ENCODE measurements at regions of chrX and their contacts with region 1.

Region 1: GRCh38 chrX:132292793-132293192 is 73.5 kb upstream of the RAP2C start:
- DNase-seq: peak; percentile 19
- ATAC-seq: peak; percentile 90
- H3K4me3 ChIP-seq: no peak overlapping the region
- H3K27ac ChIP-seq: no peak overlapping the region
- H3K4me1 ChIP-seq: no peaks in the 10 kb centered on the region
- H3K27me3 ChIP-seq: no peaks in the 10 kb centered on the region
- CTCF ChIP-seq: peak; percentile 51 to 71 (median 57)
- EP300 ChIP-seq: no peak
- POLR2A ChIP-seq: no peak
- RAD21 ChIP-seq: peak; percentile 77

Region 2: DNA sequence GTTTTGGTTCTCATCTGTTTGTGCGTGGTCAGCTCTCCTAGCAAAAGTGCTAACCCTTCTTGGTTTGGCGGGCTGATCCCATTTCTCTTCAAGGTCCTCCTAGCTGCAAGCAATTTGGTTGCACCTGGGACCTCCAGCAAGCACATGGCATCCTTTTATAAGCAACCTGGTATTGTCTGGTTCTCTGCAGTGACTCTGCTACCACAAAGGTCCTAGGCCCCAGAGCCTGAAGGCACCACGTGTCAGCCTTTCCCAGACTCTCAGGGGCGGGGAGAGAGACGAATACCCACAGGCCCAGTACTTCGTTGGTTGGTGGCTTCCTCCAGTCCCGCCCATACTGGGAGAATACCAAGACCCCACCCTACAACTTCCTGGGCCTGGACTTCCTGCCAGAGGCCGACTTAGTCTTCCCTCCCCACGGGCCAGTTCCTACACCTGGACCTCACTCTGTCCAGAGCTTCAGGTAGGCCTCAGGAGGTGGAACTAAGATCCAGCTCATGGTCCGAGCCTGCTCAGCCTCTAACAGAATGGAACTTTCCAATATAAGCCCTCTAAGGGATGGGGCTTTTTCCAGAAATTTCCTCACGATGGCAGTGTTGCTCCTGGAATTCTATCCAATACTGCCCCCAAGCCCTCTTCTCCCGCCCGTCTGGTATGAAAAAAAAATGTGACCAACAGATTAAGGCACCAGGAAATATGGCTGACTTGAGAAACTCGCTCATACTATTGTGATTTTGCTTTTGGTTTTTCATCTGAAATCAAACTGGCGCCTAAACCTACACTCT is 462.2 kb before region 1 on chrX:
- CTCF ChIA-PET with region 1: interaction called, 10 read pairs
- POLR2A ChIA-PET with region 1: no interaction called
- RAD21 ChIA-PET with region 1: interaction called, 4 read pairs
- SMC1A ChIA-PET with region 1: no interaction called
- in situ Hi-C with region 1: no loop called
- intact Hi-C with region 1: no loop called
- DNase-seq: peak; percentile 69
- ATAC-seq: peak; percentile 88
- H3K4me3 ChIP-seq: peak overlapping the region; percentile 62
- H3K27ac ChIP-seq: peak overlapping the region; percentile 48
- H3K4me1 ChIP-seq: peaks cover 4% of the 10 kb centered on the region; the same call in 1 of the 2 replicates
- H3K27me3 ChIP-seq: no peaks in the 10 kb centered on the region
- CTCF ChIP-seq: peak; percentile 28 to 57 (median 42); a peak in 4 of 6 replicates
- EP300 ChIP-seq: no peak
- POLR2A ChIP-seq: peak; percentile 67
- RAD21 ChIP-seq: peak; percentile 70

Region 3: GRCh38 chrX:132092439-132093065 is 200.2 kb before region 1 on chrX:
- CTCF ChIA-PET with region 1: interaction called, 18 read pairs
- POLR2A ChIA-PET with region 1: interaction called, 3 read pairs
- RAD21 ChIA-PET with region 1: interaction called, 8 read pairs
- SMC1A ChIA-PET with region 1: interaction called, 6 read pairs
- in situ Hi-C with region 1: no loop called
- intact Hi-C with region 1: no loop called
- DNase-seq: peak; percentile 25
- ATAC-seq: peak; percentile 93
- H3K4me3 ChIP-seq: no peak overlapping the region
- H3K27ac ChIP-seq: no peak overlapping the region
- H3K4me1 ChIP-seq: no peaks in the 10 kb centered on the region
- H3K27me3 ChIP-seq: no peaks in the 10 kb centered on the region
- CTCF ChIP-seq: peak; percentile 76 to 81 (median 81)
- EP300 ChIP-seq: no peak
- POLR2A ChIP-seq: no peak
- RAD21 ChIP-seq: peak; percentile 71

Region 4: DNA sequence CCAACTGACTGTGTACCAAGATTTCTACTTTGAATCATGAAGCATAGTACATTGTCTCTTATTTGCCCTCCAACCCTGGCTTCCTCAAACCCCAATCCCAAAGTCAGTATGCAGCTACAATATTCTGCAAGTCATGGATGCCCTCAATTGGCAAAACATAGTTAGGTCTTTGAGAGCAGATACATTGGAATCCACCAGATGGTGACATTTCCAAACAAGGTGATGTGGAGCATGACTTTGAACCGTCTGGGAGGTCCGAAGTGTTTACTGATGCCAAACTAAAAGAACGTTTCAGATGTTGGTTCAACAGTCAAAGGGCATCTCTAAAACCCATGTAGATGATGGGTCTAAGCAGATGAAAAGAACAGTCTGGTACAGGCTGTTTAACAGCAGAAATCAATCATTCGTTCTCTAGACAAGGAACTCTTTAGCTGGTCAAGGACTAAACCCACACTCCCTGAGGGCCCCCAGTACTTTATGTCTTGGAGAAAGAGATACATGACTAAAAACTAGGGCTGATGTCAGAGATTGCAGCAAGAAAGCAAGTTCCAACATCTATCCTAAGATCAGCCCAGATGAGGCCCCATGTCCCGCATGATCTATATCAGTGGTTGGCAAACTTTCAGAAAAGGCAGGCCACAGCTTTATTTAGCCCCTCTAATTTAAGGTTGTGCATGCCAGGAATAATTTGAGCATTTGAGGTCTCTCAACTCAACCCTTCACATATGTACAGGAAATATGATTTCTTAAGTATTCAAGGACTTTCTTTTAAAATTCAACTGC is 121.1 kb before region 1 on chrX:
- CTCF ChIA-PET with region 1: no interaction called
- POLR2A ChIA-PET with region 1: no interaction called
- RAD21 ChIA-PET with region 1: no interaction called
- SMC1A ChIA-PET with region 1: no interaction called
- in situ Hi-C with region 1: no loop called
- intact Hi-C with region 1: no loop called
- DNase-seq: no peak
- ATAC-seq: no peak; the same call in 2 of the 3 replicates
- H3K4me3 ChIP-seq: no peak overlapping the region
- H3K27ac ChIP-seq: no peak overlapping the region
- H3K4me1 ChIP-seq: no peaks in the 10 kb centered on the region
- H3K27me3 ChIP-seq: peaks cover 0 to 3% of the 10 kb centered on the region in 2 experiments; a peak in 1 of 4 replicates
- CTCF ChIP-seq: peak in 2 of 3 experiments; percentile 5 to 12; a peak in 2 of 6 replicates
- EP300 ChIP-seq: no peak
- POLR2A ChIP-seq: no peak
- RAD21 ChIP-seq: peak; percentile 37; the same call in 1 of the 2 replicates

Region 5: DNA sequence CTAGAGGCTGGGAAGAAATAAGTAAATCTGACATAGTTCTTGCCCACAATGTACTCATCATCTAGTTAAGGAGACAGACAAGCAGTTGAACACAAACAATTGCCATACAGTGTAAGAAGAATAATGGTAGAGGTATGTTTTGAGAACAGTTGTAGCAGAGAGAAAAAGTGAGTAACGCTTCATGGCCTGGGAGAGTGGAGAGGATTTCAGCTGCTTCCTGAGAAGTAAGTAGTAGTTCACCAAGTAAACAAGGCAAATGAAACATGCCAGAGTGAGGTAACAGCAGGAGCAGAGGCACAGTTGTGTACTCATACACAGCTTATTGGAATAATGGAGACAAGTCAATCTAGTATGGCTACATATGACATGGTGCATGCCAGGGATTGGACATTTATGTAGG is 20.0 kb before region 1 on chrX:
- CTCF ChIA-PET with region 1: interaction called, 14 read pairs
- POLR2A ChIA-PET with region 1: no interaction called
- RAD21 ChIA-PET with region 1: interaction called, 3 read pairs
- SMC1A ChIA-PET with region 1: no interaction called
- in situ Hi-C with region 1: no loop called
- intact Hi-C with region 1: no loop called
- DNase-seq: no peak
- ATAC-seq: no peak
- H3K4me3 ChIP-seq: no peak overlapping the region
- H3K27ac ChIP-seq: no peak overlapping the region
- H3K4me1 ChIP-seq: no peaks in the 10 kb centered on the region
- H3K27me3 ChIP-seq: no peaks in the 10 kb centered on the region
- CTCF ChIP-seq: no peak
- EP300 ChIP-seq: no peak
- POLR2A ChIP-seq: no peak
- RAD21 ChIP-seq: no peak

Region 6: GRCh38 chrX:132304599-132304998 is 11.8 kb after region 1 on chrX:
- CTCF ChIA-PET with region 1: interaction called, 20 read pairs
- POLR2A ChIA-PET with region 1: no interaction called
- RAD21 ChIA-PET with region 1: no interaction called
- SMC1A ChIA-PET with region 1: interaction called, 3 read pairs
- in situ Hi-C with region 1: no loop called
- intact Hi-C with region 1: no loop called
- DNase-seq: no peak
- ATAC-seq: no peak
- H3K4me3 ChIP-seq: no peak overlapping the region
- H3K27ac ChIP-seq: no peak overlapping the region
- H3K4me1 ChIP-seq: no peaks in the 10 kb centered on the region
- H3K27me3 ChIP-seq: no peaks in the 10 kb centered on the region
- CTCF ChIP-seq: no peak
- EP300 ChIP-seq: no peak
- POLR2A ChIP-seq: no peak
- RAD21 ChIP-seq: no peak

Region 7: DNA sequence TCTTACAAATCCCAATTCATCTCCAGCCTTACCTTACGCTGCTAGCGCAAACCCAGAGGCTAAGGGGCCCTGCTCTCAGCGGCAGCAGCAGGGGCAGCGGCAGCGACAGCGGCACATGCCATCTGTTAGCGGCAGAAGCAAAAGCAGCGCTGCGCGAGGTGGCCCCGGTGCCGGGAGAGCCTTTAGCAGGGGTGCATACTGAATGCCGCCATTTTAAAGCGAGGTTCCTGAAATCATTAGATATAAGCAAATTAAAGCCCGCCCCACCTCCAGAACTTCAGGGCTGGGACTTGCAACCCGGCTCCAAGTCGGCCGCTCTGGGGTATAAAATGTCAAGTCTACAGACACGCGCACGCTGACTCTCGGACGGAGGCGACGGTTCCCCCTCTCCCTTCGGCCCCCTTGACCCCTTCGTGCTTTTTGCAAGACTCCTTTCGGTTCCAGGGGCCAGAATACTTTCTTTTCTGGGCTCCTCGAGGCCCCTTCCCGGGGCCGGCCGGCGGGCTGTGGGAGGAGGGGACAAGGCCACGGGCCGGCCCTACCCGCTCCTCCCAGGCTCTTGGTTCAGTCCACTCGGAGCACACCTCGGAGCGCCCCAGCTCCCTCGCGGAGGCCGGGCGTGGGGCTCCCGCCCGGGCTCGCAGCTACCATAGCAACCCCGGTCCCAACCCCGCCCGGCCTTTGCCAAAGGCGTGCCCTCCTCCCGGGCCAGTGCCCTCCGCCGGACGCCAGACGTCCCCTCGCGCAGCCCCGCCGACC is 196.2 kb after region 1 on chrX and contains the start of gene MBNL3:
- CTCF ChIA-PET with region 1: interaction called, 11 read pairs
- POLR2A ChIA-PET with region 1: no interaction called
- RAD21 ChIA-PET with region 1: interaction called, 6 read pairs
- SMC1A ChIA-PET with region 1: no interaction called
- in situ Hi-C with region 1: no loop called
- intact Hi-C with region 1: loop called (anchors 2 kb)
- DNase-seq: no peak
- ATAC-seq: peak; percentile 79
- H3K4me3 ChIP-seq: peak within 1 kb of the TSS; percentile 72
- H3K27ac ChIP-seq: peak within 1 kb of the TSS; percentile 81
- H3K4me1 ChIP-seq: no peaks in the 10 kb centered on the region
- H3K27me3 ChIP-seq: no peaks in the 10 kb centered on the region
- CTCF ChIP-seq: no peak
- EP300 ChIP-seq: no peak
- POLR2A ChIP-seq: peak; percentile 72
- RAD21 ChIP-seq: no peak
- polyA plus RNA-seq, gene MBNL3: 3.4 to 6.1 TPM

Region 8: DNA sequence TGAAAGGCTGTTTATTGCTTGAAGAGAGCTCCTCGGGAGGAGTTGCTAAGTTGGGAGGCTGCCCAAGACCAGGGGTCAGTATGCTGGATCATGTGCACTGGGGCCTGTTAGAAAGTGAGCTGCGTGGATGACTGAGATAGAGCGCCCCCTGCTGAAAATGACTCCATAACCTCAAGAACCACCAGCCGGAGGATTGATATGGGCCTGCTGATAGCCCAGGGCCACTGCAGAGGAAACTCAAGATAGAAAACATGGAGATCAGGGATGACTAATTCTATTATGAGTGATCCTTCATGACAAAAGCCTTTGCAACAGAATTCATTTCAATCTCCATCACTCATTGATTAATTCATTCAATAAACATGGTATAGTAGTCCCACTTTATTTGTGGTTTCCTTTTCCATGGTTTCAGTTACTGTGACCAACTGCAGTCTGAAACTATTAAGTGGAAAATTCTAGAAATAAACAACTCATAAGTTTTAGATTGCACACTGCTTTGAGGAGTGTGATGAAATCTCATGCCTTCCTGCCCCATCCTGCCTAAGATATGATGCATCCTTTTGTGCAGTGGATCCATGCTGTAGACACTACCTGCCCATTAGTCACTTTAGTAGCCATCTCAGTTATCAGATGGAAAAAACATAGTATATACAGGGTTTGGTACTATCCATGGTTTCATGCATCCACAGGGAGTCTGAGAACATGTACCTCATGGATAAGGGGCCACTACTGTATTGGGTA is 322.8 kb after region 1 on chrX:
- CTCF ChIA-PET with region 1: interaction called, 73 read pairs
- POLR2A ChIA-PET with region 1: no interaction called
- RAD21 ChIA-PET with region 1: interaction called, 23 read pairs
- SMC1A ChIA-PET with region 1: interaction called, 40 read pairs
- in situ Hi-C with region 1: loop called (anchors 5 kb)
- intact Hi-C with region 1: loop called (anchors 1 kb)
- DNase-seq: no peak
- ATAC-seq: peak; percentile 93
- H3K4me3 ChIP-seq: no peak overlapping the region
- H3K27ac ChIP-seq: no peak overlapping the region
- H3K4me1 ChIP-seq: no peaks in the 10 kb centered on the region
- H3K27me3 ChIP-seq: no peaks in the 10 kb centered on the region
- CTCF ChIP-seq: peak; percentile 53 to 59 (median 54)
- EP300 ChIP-seq: no peak
- POLR2A ChIP-seq: no peak
- RAD21 ChIP-seq: peak; percentile 51

Region 9: GRCh38 chrX:132692066-132692465 is 399.3 kb after region 1 on chrX:
- CTCF ChIA-PET with region 1: no interaction called
- POLR2A ChIA-PET with region 1: no interaction called
- RAD21 ChIA-PET with region 1: no interaction called
- SMC1A ChIA-PET with region 1: no interaction called
- in situ Hi-C with region 1: no loop called
- intact Hi-C with region 1: no loop called
- DNase-seq: no peak
- ATAC-seq: no peak
- H3K4me3 ChIP-seq: no peak overlapping the region
- H3K27ac ChIP-seq: no peak overlapping the region
- H3K4me1 ChIP-seq: no peaks in the 10 kb centered on the region
- H3K27me3 ChIP-seq: no peaks in the 10 kb centered on the region; a peak in 1 of 4 replicates
- CTCF ChIP-seq: no peak
- EP300 ChIP-seq: no peak
- POLR2A ChIP-seq: no peak
- RAD21 ChIP-seq: no peak

Region 10: GRCh38 chrX:133958997-133959688 is 1666.3 kb after region 1 on chrX:
- CTCF ChIA-PET with region 1: no interaction called
- POLR2A ChIA-PET with region 1: no interaction called
- RAD21 ChIA-PET with region 1: no interaction called
- SMC1A ChIA-PET with region 1: no interaction called
- in situ Hi-C with region 1: no loop called
- intact Hi-C with region 1: no loop called
- DNase-seq: no peak
- ATAC-seq: no peak
- H3K4me3 ChIP-seq: no peak overlapping the region
- H3K27ac ChIP-seq: no peak overlapping the region
- H3K4me1 ChIP-seq: no peaks in the 10 kb centered on the region
- H3K27me3 ChIP-seq: peaks cover 0 to 2% of the 10 kb centered on the region in 2 experiments; a peak in 1 of 4 replicates
- CTCF ChIP-seq: no peak
- EP300 ChIP-seq: no peak
- POLR2A ChIP-seq: no peak
- RAD21 ChIP-seq: no peak